ENCODE measurements at regions of chr18 and their contacts with region 1.

Region 1: GRCh38 chr18:4631239-4631638 is 176.1 kb upstream of the DLGAP1 start:
- DNase-seq: no peak
- ATAC-seq: no peak
- H3K4me3 ChIP-seq: no peak overlapping the region
- H3K4me3 Mint-ChIP-seq: no peak overlapping the region
- H3K27ac ChIP-seq: no peak overlapping the region
- H3K27ac Mint-ChIP-seq: no peak overlapping the region
- H3K4me1 ChIP-seq: no peaks in the 10 kb centered on the region
- H3K4me1 Mint-ChIP-seq: no peaks in the 10 kb centered on the region
- H3K27me3 ChIP-seq: no peaks in the 10 kb centered on the region
- H3K27me3 Mint-ChIP-seq: no peaks in the 10 kb centered on the region
- CTCF ChIP-seq: no peak

Region 2: GRCh38 chr18:4557502-4557901 is 73.7 kb before region 1 on chr18:
- CTCF ChIA-PET with region 1: no interaction called
- POLR2A ChIA-PET with region 1: no interaction called
- intact Hi-C with region 1: loop called in 1 of 2 experiments (anchors 10 kb)
- DNase-seq: no peak
- ATAC-seq: no peak
- H3K4me3 ChIP-seq: no peak overlapping the region
- H3K4me3 Mint-ChIP-seq: no peak overlapping the region
- H3K27ac ChIP-seq: no peak overlapping the region
- H3K27ac Mint-ChIP-seq: no peak overlapping the region
- H3K4me1 ChIP-seq: no peaks in the 10 kb centered on the region
- H3K4me1 Mint-ChIP-seq: no peaks in the 10 kb centered on the region
- H3K27me3 ChIP-seq: no peaks in the 10 kb centered on the region
- H3K27me3 Mint-ChIP-seq: no peaks in the 10 kb centered on the region
- CTCF ChIP-seq: no peak

Measured in CD4-positive, alpha-beta T cell (primary cell).